Head of caudate nucleus (tissue), 42 donors: ENCODE measurements at regions of chr3 and their contacts with region 1.

Region 1: GRCh38 chr3:181709537-181710279 is 2.0 kb upstream of the SOX2 start:
- DNase-seq: peak in 41 of 42 donors; percentile 72 to 95 (median 89)

Region 2: GRCh38 chr3:182092662-182093262 is 383.1 kb after region 1 on chr3:
- intact Hi-C with region 1: loop called (anchors 5 kb)
- DNase-seq: peak; percentile 3 to 78 (median 50)

Region 3: DNA sequence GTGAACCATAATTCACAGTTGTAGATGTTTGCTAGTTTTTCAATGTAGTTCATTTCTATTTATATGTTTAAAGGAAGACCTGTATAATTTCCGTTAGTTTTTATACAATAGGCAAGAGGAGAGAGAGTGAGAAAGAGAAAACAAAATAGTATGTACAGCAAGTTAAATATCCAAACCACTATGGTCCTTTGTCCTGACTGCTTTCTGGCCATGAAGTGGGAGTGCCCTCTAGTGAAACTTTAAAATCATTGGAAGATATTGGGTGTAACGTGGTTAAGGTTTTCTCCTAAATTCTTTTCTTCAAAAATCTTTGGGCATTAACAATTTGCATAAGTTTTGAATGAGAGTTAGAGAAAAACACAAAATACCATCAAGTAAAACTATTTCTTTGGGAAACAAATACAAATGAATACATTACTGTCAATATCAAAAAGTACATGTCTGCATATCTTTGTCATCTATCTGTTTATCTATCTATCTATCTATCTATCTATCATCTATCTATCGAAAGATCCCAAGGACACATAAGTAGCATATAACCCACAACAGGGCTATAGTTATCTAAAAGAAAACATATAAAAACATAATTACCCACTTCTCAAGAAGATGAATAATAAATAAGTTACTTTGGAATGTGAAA is 549.0 kb after region 1 on chr3:
- intact Hi-C with region 1: loop called (anchors 5 kb)
- DNase-seq: peak in 19 of 42 donors; percentile 12 to 75 (median 39)

Region 4: DNA sequence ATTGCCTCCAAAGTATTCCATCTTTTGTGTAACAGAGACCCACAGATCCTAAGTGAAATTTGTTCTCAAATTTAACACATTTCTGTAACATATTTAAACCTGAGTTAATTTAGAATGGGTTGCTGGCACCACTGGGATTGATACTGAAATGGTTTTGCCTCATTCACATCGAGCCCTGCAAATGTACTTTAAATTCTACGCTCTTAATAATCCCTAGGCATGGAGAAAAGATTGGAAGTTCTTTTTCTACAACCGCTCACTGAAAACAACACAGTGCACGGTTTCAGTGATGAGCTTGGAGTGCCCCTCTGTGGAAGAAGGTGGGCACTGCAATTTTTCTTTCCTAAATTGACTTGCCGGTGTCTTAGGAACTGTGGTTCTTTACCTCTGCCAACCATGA is 973.7 kb after region 1 on chr3:
- intact Hi-C with region 1: loop called (anchors 5 kb)
- DNase-seq: peak; percentile 26 to 92 (median 79)